ENCODE measurements at regions of chrX and their contacts with region 1.

Region 1: DNA sequence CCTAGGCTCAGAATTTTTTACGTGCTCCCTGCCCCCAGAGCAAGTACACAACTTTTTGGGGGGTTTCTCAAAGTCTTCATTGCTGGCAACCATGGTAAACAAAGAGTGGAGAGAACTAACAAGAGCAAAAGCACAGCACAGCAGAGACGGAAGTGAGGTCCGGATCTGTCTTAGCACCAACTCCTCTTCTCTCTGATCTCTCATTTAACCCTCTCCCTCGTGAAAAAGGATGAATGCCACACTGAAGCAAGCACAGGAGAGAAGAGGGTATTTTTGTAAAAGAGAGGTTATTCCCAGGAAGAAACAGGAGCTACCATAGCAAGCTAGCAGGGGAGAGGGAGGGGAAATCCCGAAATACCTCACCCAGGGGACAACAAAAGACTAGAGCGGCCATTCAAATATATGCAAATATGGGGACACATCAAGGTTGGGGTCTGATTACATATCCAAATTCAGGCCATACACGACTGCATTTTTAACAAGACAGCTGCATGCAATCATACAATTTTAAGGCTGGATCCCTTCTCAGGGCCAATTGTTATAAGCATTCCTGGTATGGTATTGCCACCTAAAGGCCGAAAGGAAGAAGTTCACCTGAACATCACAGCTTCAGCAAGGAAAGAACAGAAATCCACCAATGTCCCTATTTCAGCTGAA is 46.6 kb downstream of the CD40LG start:
- DNase-seq: peak; percentile 64
- ATAC-seq: 0 out of 2 replicates have a peak, but pooled peaks have one; percentile 30
- H3K4me3 ChIP-seq: no peak overlapping the region
- H3K27ac ChIP-seq: no peak overlapping the region
- H3K4me1 ChIP-seq: peaks cover 22% of the 10 kb centered on the region
- H3K27me3 ChIP-seq: no peaks in the 10 kb centered on the region
- CTCF ChIP-seq: peak; percentile 85

Region 2: DNA sequence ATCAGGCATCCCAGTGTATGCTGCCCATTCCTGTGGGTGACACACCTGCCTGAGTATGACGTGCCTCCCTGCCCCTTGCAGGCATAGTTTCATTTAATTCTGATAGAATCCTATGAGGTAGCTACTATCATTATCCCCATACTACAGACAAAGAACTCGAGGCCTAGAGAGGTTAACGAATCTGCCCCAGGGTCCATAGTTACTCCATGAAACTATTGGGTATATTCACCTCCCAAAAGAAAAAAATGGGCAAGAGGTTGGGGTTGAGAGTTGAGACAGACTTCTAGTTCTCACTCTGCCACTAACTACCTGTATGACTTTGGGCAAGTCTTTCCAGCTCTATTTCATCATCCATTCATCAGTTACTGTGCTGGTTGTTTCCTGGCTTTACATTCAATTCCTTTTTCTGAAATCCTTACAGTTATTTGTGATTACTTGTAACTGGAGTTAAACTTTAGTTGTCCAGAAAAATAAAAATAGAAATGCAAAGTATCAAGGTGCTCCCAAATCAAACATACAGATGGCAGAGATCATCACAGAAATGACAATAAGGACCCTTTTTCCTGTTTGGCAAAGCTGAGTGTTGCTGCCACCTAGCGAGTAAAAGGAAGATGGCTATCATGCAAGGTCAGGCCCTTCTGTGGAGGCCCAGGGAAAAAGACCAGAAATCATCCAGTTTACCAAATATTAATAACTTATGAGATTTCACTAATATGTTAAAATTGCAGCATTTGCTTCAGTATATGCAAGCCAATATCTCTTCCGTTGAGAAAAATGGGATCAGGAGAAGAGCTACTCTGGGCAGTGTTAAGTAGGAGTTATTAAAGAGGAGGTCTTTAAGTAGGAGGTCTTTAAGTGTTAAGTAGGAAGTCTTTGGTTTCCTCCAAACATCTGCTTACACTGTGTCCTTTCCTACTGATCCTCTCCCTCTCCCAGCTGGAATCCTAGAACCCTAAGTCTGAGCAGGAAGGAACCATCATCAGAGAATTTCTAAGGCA is 426.2 kb before region 1 on chrX:
- CTCF ChIA-PET with region 1: no interaction called
- POLR2A ChIA-PET with region 1: no interaction called
- intact Hi-C with region 1: loop called (anchors 10 kb)
- DNase-seq: peak; percentile 67
- ATAC-seq: peak; percentile 71
- H3K4me3 ChIP-seq: no peak overlapping the region
- H3K27ac ChIP-seq: no peak overlapping the region
- H3K4me1 ChIP-seq: no peaks in the 10 kb centered on the region
- H3K27me3 ChIP-seq: no peaks in the 10 kb centered on the region
- CTCF ChIP-seq: peak; percentile 87

Region 3: DNA sequence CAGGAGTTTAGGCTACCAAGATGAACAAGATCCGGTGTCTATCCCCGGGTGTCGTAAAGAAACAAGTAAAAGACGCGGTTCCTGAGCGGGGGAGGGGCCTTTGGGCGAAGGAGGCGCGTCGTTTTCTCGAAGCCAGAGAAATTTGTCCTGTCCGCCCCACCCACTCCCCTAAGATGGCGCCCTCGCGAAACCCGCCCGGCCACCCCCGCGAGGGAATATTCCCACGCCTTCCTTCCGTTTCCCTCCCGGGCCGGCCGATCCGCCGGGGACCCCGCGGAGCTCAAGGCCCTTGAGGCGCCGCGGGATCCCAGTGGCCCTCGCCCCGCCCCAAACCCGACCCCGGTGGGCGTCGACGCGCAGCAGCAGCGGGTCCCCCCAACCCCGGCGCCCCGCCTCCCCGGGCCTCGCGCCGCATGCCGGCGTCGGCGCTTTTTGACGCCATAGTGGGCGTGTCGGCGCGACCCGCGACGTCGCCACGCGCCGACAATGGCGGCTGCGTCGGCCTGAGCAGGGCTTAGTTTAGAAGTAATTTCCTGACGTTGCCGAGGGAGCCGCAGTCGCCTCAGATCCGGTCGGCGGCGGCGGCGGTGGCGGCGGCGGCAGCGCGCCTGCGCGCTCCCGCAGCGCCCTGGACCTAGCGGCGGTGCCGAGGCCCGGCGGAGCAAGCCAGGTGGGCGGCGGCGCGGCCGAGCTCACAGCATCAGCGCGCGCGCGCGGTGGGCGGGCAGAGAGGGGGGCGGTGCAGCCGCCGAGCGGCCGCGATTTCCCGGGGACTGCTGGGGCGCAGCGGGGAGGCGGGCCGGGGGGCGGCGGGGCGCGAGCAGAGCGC is 197.6 kb before region 1 on chrX and contains the start of gene HTATSF1:
- CTCF ChIA-PET with region 1: interaction called, 4 read pairs
- POLR2A ChIA-PET with region 1: no interaction called
- intact Hi-C with region 1: loop called (anchors 2 kb)
- DNase-seq: peak; percentile 89
- ATAC-seq: peak; percentile 80
- H3K4me3 ChIP-seq: peak within 1 kb of the TSS; percentile 99
- H3K27ac ChIP-seq: peak within 1 kb of the TSS; percentile 95
- H3K4me1 ChIP-seq: no peaks in the 10 kb centered on the region
- H3K27me3 ChIP-seq: no peaks in the 10 kb centered on the region
- CTCF ChIP-seq: no peak
- total RNA-seq, gene HTATSF1: 74.7 and 97.9 TPM in 2 replicates

Region 4: GRCh38 chrX:136577552-136577951 is 117.0 kb before region 1 on chrX:
- CTCF ChIA-PET with region 1: interaction called, 3 read pairs
- POLR2A ChIA-PET with region 1: no interaction called
- intact Hi-C with region 1: loop called (anchors 1 kb)
- DNase-seq: peak; percentile 69
- ATAC-seq: peak; percentile 99
- H3K4me3 ChIP-seq: no peak overlapping the region
- H3K27ac ChIP-seq: no peak overlapping the region
- H3K4me1 ChIP-seq: peaks cover 12% of the 10 kb centered on the region; the same call in 1 of the 2 replicates
- H3K27me3 ChIP-seq: no peaks in the 10 kb centered on the region
- CTCF ChIP-seq: peak; percentile 76